Breast epithelium (tissue), 4 donors: ENCODE measurements at regions of chr22 and their contacts with region 1.

Region 1: GRCh38 chr22:28829358-28830181 is 29.2 kb upstream of the XBP1 start:
- DNase-seq: peak; percentile 75 to 81
- H3K4me3 ChIP-seq: no peak overlapping the region
- H3K27ac ChIP-seq: peak overlapping the region in 1 of 2 donors; percentile 20
- H3K4me1 ChIP-seq: no peaks in the 10 kb centered on the region
- H3K27me3 ChIP-seq: no peaks in the 10 kb centered on the region
- CTCF ChIP-seq: peak; percentile 96 to 99 (median 98)
- POLR2A ChIP-seq: no peak

Region 2: GRCh38 chr22:28600546-28601143 is 228.9 kb before region 1 on chr22:
- intact Hi-C with region 1: loop called (anchors 10 kb)
- DNase-seq: no peak
- H3K4me3 ChIP-seq: no peak overlapping the region
- H3K27ac ChIP-seq: no peak overlapping the region
- H3K4me1 ChIP-seq: no peaks in the 10 kb centered on the region
- H3K27me3 ChIP-seq: no peaks in the 10 kb centered on the region
- CTCF ChIP-seq: peak in 2 of 3 donors; percentile 58 to 68
- POLR2A ChIP-seq: no peak

Region 3: GRCh38 chr22:28728621-28729313 is 100.8 kb before region 1 on chr22:
- intact Hi-C with region 1: no loop called
- DNase-seq: no peak
- H3K4me3 ChIP-seq: no peak overlapping the region
- H3K27ac ChIP-seq: no peak overlapping the region
- H3K4me1 ChIP-seq: no peaks in the 10 kb centered on the region
- H3K27me3 ChIP-seq: no peaks in the 10 kb centered on the region
- CTCF ChIP-seq: no peak
- POLR2A ChIP-seq: no peak

Region 4: GRCh38 chr22:28923826-28924732 is 94.5 kb after region 1 on chr22:
- intact Hi-C with region 1: loop called (anchors 5 kb)
- DNase-seq: peak; percentile 60 to 75
- H3K4me3 ChIP-seq: peak overlapping the region in 2 of 3 donors; percentile 12 to 19
- H3K27ac ChIP-seq: peak overlapping the region; percentile 22 to 63
- H3K4me1 ChIP-seq: no peaks in the 10 kb centered on the region
- H3K27me3 ChIP-seq: no peaks in the 10 kb centered on the region
- CTCF ChIP-seq: no peak
- POLR2A ChIP-seq: no peak